ENCODE measurements at regions of chr7 and their contacts with region 1.

Region 1: DNA sequence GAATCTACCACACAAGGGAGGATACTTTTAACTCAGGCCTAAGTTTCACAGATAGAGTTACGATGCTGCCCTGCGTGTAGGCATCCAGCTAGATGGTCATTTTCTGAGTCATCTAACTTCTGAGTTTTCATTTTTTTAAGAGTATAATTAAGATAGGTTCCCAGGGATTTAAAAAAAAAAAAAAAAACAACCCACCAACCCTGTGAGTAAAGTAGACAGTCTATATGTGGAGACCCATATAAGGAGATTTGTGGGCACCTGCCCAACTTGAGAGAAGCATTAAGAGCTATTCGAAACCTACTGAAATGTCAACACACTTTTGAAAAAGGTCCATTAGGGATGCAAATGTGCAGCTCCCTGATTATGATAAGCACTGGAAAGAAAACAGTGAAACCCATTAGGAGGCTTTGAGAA is 257.3 kb downstream of the TRIL start:
- DNase-seq: no peak
- ATAC-seq: peak; percentile 23
- H3K4me3 ChIP-seq: no peak overlapping the region
- H3K27ac ChIP-seq: no peak overlapping the region
- H3K4me1 ChIP-seq: peaks cover 18% of the 10 kb centered on the region
- H3K27me3 ChIP-seq: no peaks in the 10 kb centered on the region
- CTCF ChIP-seq: no peak
- EP300 ChIP-seq: no peak
- POLR2A ChIP-seq: no peak
- RAD21 ChIP-seq: no peak

Region 2: GRCh38 chr7:27616914-27617548 is 1083.8 kb before region 1 on chr7:
- CTCF ChIA-PET with region 1: no interaction called
- POLR2A ChIA-PET with region 1: no interaction called
- RAD21 ChIA-PET with region 1: no interaction called
- SMC1A ChIA-PET with region 1: no interaction called
- in situ Hi-C with region 1: no loop called
- intact Hi-C with region 1: no loop called
- DNase-seq: no peak
- ATAC-seq: no peak
- H3K4me3 ChIP-seq: no peak overlapping the region
- H3K27ac ChIP-seq: no peak overlapping the region
- H3K4me1 ChIP-seq: no peaks in the 10 kb centered on the region
- H3K27me3 ChIP-seq: no peaks in the 10 kb centered on the region
- CTCF ChIP-seq: no peak
- EP300 ChIP-seq: no peak
- POLR2A ChIP-seq: no peak
- RAD21 ChIP-seq: no peak

Region 3: GRCh38 chr7:28685644-28686417 is 15.0 kb before region 1 on chr7:
- CTCF ChIA-PET with region 1: interaction called, 13 read pairs
- POLR2A ChIA-PET with region 1: interaction called, 6 read pairs
- RAD21 ChIA-PET with region 1: interaction called, 36 read pairs
- SMC1A ChIA-PET with region 1: interaction called, 19 read pairs
- in situ Hi-C with region 1: no loop called
- intact Hi-C with region 1: no loop called
- DNase-seq: no peak
- ATAC-seq: peak; percentile 78
- H3K4me3 ChIP-seq: peak overlapping the region; percentile 36
- H3K27ac ChIP-seq: no peak overlapping the region; the same call in 1 of the 2 replicates
- H3K4me1 ChIP-seq: peaks cover 19% of the 10 kb centered on the region
- H3K27me3 ChIP-seq: no peaks in the 10 kb centered on the region
- CTCF ChIP-seq: no peak
- EP300 ChIP-seq: 0 out of 4 replicates have a peak, but pooled peaks of 1 of the 2 experiments have one; percentile 7
- POLR2A ChIP-seq: no peak
- RAD21 ChIP-seq: no peak

Region 4: DNA sequence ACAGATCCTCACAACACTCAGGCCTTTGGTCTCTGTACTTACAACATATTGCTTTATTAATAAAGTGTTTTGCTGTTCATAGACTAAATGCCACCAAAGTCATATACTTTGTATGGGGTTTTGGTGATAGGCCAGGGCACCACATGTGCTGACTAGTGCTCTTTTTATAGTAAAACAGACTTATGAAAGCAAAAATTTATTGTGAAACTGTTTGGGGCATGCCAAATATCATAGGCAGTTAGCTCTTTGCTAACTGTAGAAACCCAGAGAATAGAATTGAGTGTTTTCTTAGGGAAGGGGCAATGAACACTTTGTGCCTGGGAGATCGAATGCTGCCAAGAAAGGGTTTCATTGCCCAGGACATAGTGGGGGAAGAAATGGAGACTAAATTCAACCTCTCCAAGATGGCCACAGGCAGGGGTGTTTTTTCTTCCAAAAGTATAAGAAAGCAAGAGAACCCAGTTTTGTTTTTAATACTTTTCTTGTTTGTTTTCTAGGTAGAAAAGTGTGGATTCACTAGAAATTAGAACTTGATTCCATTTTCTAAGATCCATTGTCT is 114.7 kb after region 1 on chr7:
- CTCF ChIA-PET with region 1: no interaction called
- POLR2A ChIA-PET with region 1: interaction called, 5 read pairs
- RAD21 ChIA-PET with region 1: interaction called, 6 read pairs
- SMC1A ChIA-PET with region 1: interaction called, 10 read pairs
- in situ Hi-C with region 1: no loop called
- intact Hi-C with region 1: loop called (anchors 5 kb)
- DNase-seq: peak; percentile 34
- ATAC-seq: peak; percentile 69
- H3K4me3 ChIP-seq: peak overlapping the region; percentile 14; the same call in 1 of the 2 replicates
- H3K27ac ChIP-seq: peak overlapping the region; percentile 80
- H3K4me1 ChIP-seq: peaks cover 37% of the 10 kb centered on the region
- H3K27me3 ChIP-seq: no peaks in the 10 kb centered on the region
- CTCF ChIP-seq: no peak
- EP300 ChIP-seq: no peak
- POLR2A ChIP-seq: no peak
- RAD21 ChIP-seq: no peak

Region 5: GRCh38 chr7:29140873-29141468 is 440.2 kb after region 1 on chr7:
- CTCF ChIA-PET with region 1: no interaction called
- POLR2A ChIA-PET with region 1: no interaction called
- RAD21 ChIA-PET with region 1: no interaction called
- SMC1A ChIA-PET with region 1: no interaction called
- in situ Hi-C with region 1: no loop called
- intact Hi-C with region 1: no loop called
- DNase-seq: no peak
- ATAC-seq: no peak
- H3K4me3 ChIP-seq: no peak overlapping the region
- H3K27ac ChIP-seq: no peak overlapping the region
- H3K4me1 ChIP-seq: no peaks in the 10 kb centered on the region
- H3K27me3 ChIP-seq: peaks cover 0 to 2% of the 10 kb centered on the region in 2 experiments; a peak in 1 of 4 replicates
- CTCF ChIP-seq: no peak
- EP300 ChIP-seq: no peak
- POLR2A ChIP-seq: no peak
- RAD21 ChIP-seq: no peak